ENCODE measurements at regions of chr11 and their contacts with region 1.

Region 1: DNA sequence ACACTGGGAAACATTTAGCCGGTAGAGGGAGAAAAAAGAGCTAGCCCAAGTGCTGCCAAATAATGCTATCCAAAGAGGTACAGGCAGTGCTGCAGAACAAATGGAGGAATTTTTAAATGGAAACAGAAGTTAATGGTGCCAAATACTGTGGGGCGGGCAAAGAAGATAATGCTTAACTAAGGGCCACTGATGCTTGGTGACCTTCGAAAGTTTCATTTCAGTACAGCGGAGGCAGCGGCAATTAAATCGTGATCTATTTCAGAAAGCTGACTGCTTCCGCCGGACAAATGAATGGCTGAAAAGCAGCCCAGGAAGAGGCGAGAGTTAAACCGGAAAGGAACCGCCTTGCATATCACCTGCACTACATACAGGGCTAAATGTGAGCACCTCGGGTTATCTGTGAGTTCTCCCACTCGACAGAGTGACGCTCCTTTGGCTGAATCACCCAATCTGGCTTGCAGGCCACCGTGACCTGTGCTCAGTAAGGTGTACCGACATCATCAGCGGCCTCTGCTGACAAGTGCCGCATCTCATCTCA is 42.1 kb downstream of the CADM1 start:
- DNase-seq: no peak
- H3K4me3 ChIP-seq: no peak overlapping the region
- H3K27ac ChIP-seq: no peak overlapping the region
- H3K4me1 ChIP-seq: no peaks in the 10 kb centered on the region
- H3K27me3 ChIP-seq: peaks cover 16% of the 10 kb centered on the region
- CTCF ChIP-seq: no peak

Region 2: GRCh38 chr11:116492600-116492999 is 1030.5 kb after region 1 on chr11:
- CTCF ChIA-PET with region 1: no interaction called
- POLR2A ChIA-PET with region 1: no interaction called
- intact Hi-C with region 1: no loop called
- DNase-seq: no peak
- H3K4me3 ChIP-seq: no peak overlapping the region
- H3K27ac ChIP-seq: no peak overlapping the region
- H3K4me1 ChIP-seq: no peaks in the 10 kb centered on the region
- H3K27me3 ChIP-seq: peaks cover 74% of the 10 kb centered on the region
- CTCF ChIP-seq: no peak

Region 3: DNA sequence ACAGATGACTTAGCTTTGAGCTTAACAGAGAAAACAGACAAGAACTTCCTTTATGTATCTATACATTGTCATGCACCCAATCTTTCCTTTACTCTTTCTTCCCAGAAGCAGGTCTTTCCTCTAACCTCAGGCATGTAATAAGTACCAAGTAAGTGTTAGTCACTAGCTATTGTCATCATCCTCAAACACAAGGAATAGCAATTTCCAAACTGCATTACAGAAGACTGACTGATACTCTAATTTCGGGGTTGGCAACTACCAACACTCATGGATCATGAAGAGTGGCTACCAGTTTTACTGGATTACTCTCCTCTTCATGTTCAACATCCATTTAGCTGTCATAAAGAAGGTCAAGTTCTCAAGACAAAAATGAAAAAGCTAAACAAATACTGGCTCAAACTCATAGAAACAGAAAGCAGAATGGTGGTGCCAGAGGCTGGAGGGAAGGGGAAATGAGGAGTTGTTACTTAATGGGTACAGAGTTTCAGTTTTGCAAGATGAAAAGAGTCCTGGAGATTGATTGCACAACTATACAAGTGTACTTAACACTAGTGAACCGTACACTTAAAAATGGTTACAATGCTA is 1524.5 kb after region 1 on chr11:
- CTCF ChIA-PET with region 1: no interaction called
- POLR2A ChIA-PET with region 1: interaction called, 19 read pairs
- intact Hi-C with region 1: no loop called
- DNase-seq: peak in 1 of 2 experiments; percentile 98
- H3K4me3 ChIP-seq: peak overlapping the region; percentile 19; the same call in 1 of the 2 replicates
- H3K27ac ChIP-seq: peak overlapping the region; percentile 82
- H3K4me1 ChIP-seq: peaks cover 43% of the 10 kb centered on the region
- H3K27me3 ChIP-seq: no peaks in the 10 kb centered on the region
- CTCF ChIP-seq: no peak

Measured in PC-9 (cell line).